Ascending aorta (tissue), 2 donors: ENCODE measurements at regions of chr13 and their contacts with region 1.

Region 1: GRCh38 chr13:99501184-99501847 is at the start of gene TM9SF2:
- DNase-seq: peak; percentile 89 to 99
- H3K4me3 ChIP-seq: peak within 1 kb of the TSS; percentile 93 to 96
- H3K27ac ChIP-seq: peak within 1 kb of the TSS; percentile 83 to 87
- H3K4me1 ChIP-seq: peaks cover 27 to 37% of the 10 kb centered on the region in 2 donors
- H3K27me3 ChIP-seq: no peaks in the 10 kb centered on the region
- CTCF ChIP-seq: no peak
- total RNA-seq, gene TM9SF2: 56.8 TPM

Region 2: GRCh38 chr13:99087096-99087953 is 414.0 kb before region 1 on chr13:
- intact Hi-C with region 1: loop called (anchors 1 kb)
- DNase-seq: peak; percentile 33 to 93
- H3K4me3 ChIP-seq: peak overlapping the region; percentile 75 to 93
- H3K27ac ChIP-seq: peak overlapping the region; percentile 90 to 92
- H3K4me1 ChIP-seq: peaks cover 0 to 8% of the 10 kb centered on the region in 2 donors
- H3K27me3 ChIP-seq: no peaks in the 10 kb centered on the region
- CTCF ChIP-seq: peak in 2 of 3 experiments; percentile 16 to 21

Region 3: DNA sequence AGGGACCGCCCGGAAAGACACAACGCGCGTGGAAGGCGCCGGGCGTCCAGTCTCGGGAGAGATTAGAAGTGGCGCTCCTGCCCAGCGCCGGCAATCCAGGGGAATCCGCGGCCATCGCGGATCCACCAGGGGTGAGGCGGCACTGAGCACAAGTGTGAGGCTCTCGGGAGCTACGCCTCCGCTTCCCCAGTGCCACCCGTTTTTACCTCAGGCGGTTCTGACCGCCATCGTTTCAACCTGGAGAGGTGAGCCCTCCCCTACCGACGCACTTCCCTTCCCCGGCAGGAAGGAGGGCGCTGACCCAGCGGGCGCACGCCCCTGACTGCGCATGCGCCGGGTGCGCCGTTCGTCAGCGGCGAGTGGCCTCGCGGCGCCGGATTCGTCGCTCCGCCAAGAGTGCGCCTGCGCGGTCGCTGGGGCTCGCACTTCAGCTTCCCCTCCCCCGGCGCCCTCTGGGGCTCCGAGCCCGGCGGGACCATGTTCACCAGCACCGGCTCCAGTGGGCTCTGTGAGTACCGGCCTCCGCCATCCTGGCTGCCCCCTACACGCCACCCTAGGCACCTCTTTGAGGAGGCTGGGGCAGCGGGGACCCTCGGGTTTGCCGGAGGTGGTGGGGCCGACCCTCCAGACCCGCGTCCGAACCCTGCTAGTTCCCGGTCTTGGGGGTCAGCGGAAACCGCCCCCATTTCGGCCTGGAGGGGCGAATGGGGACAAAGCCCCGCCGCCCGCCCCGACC is 300.7 kb before region 1 on chr13 and contains the start of gene UBAC2:
- intact Hi-C with region 1: loop called (anchors 5 kb)
- DNase-seq: peak; percentile 79 to 97
- H3K4me3 ChIP-seq: peak within 1 kb of the TSS; percentile 82 to 96
- H3K27ac ChIP-seq: peak within 1 kb of the TSS; percentile 98
- H3K4me1 ChIP-seq: peaks cover 0 to 6% of the 10 kb centered on the region in 2 donors
- H3K27me3 ChIP-seq: no peaks in the 10 kb centered on the region
- CTCF ChIP-seq: no peak
- total RNA-seq, gene UBAC2: 67.8 TPM

Region 4: DNA sequence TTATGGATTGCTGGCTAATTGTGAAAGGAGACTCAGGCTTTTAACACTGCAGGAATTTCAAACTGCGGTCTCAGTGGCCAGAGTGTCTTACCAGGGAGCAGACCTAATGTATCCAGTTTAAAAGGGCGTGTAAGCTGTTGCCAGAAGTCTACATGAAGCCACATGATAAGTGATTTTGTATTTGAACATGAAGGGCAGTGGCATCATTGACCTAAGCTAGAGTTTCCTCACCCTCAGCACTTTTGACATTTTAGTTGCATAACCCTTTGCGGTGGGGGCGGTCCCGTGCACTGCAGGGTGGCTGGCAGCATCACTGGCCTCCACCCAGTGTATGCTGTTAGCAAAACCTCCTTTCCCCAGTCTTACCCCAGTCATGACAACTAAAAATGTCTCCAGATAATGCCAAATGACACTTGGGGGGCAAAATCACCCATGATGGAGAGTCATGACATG is 219.5 kb before region 1 on chr13:
- intact Hi-C with region 1: loop called (anchors 5 kb)
- DNase-seq: peak; percentile 34 to 83
- H3K4me3 ChIP-seq: no peak overlapping the region
- H3K27ac ChIP-seq: peak overlapping the region; percentile 59 to 62
- H3K4me1 ChIP-seq: peaks cover 5 to 18% of the 10 kb centered on the region in 2 donors
- H3K27me3 ChIP-seq: no peaks in the 10 kb centered on the region
- CTCF ChIP-seq: no peak

Region 5: DNA sequence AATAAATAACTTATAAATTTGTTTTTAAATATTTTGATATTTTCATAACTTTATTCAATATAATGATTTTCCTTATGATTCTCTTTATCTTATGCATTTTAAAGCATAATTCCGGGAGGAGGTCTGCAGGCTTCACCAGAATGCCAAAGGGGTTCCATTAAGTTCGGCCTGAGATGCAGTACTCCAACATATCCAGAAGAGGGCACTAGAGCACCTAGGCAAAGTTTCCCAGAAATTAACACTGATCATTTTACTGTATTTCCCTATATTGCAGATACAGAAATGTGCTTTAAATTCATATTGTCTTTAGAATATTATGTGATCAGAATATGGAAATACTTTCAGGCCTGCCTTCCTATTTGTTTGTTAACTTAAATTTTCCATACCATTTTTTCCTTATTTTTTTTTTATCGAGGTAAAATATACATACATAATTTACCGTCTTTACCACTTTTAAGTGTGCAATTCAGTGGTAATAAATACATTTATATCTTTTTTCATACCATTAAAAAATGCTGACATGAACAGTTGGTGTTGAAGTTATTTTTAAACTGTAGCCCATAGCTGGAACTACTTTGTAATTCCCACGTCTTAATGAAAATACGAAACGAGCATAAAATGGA is 58.9 kb before region 1 on chr13:
- intact Hi-C with region 1: loop called (anchors 1 kb)
- DNase-seq: no peak
- H3K4me3 ChIP-seq: no peak overlapping the region
- H3K27ac ChIP-seq: no peak overlapping the region
- H3K4me1 ChIP-seq: no peaks in the 10 kb centered on the region
- H3K27me3 ChIP-seq: no peaks in the 10 kb centered on the region
- CTCF ChIP-seq: peak; percentile 73 to 93 (median 79)

Region 6: GRCh38 chr13:99606324-99607066 is 105.2 kb after region 1 on chr13:
- intact Hi-C with region 1: loop called (anchors 1 kb)
- DNase-seq: peak; percentile 54 to 91
- H3K4me3 ChIP-seq: peak within 1 kb of the TSS; percentile 61 to 96
- H3K27ac ChIP-seq: peak within 1 kb of the TSS; percentile 60 to 88
- H3K4me1 ChIP-seq: peaks cover 0 to 3% of the 10 kb centered on the region in 2 donors
- H3K27me3 ChIP-seq: no peaks in the 10 kb centered on the region
- CTCF ChIP-seq: peak in 1 of 3 experiments; percentile 1

Region 7: GRCh38 chr13:100088644-100089464 is 587.5 kb after region 1 on chr13 and contains the start of gene PCCA:
- intact Hi-C with region 1: loop called (anchors 2 kb)
- DNase-seq: peak; percentile 77 to 96
- H3K4me3 ChIP-seq: peak within 1 kb of the TSS; percentile 87 to 96
- H3K27ac ChIP-seq: peak within 1 kb of the TSS; percentile 75 to 80
- H3K4me1 ChIP-seq: peaks cover 0 to 8% of the 10 kb centered on the region in 2 donors
- H3K27me3 ChIP-seq: no peaks in the 10 kb centered on the region
- CTCF ChIP-seq: no peak
- total RNA-seq, gene PCCA: 3.6 TPM